ENCODE measurements at regions of chr7 and their contacts with region 1.

Region 1: DNA sequence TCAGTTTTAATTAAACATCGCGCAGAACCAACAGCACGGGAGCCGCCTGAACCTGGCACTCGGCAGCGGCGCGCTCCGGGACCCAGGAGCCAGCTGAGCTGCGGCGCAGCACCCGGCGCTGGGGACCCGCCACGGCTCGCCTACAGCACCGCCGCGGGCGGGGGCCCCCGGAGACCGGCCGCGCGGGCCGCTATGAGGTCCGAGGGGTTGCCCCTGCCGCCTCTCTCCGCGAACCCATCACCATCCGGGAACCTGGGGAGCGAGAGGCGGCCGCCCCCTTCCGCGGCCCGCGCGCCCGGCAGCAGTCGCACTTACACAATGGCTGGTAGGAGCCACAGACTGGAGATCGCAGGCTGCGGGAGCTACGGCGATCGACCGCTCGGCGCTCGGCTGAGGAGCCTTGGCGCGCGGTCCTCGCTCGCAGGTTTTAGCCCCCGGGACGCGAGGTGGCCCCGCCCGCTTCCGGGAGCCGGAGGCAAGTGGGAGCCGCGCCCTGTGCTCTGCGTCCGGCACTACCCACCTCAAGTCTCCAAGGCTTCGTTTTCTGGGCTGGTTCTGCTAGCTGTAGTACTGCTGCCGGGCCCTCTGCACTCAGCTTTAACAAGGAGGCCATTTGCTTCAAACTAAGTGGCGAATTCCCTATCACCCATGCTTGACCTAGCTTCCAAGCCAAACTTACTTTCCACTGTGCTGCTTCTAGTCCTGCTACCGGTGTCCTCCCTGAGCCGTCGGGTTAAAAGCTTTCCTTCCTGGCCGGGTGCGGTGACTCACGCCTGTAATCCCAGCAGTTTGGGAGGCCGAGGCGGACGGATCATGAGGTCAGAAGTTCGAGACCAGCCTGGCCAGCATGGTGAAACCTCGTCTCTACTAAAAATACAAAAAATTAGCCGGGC is at the start of gene TPK1:
- DNase-seq: peak; percentile 95
- H3K4me3 ChIP-seq: peak within 1 kb of the TSS; percentile 82
- H3K27ac ChIP-seq: peak within 1 kb of the TSS; percentile 85
- H3K4me1 ChIP-seq: peaks cover 24% of the 10 kb centered on the region
- CTCF ChIP-seq: no peak
- total RNA-seq, gene TPK1: 5.0 and 6.7 TPM in 2 replicates

Region 2: GRCh38 chr7:144738708-144739314 is 97.1 kb before region 1 on chr7:
- CTCF ChIA-PET with region 1: no interaction called
- POLR2A ChIA-PET with region 1: interaction called, 3 read pairs
- intact Hi-C with region 1: loop called (anchors 5 kb)
- DNase-seq: peak; percentile 60
- H3K4me3 ChIP-seq: no peak overlapping the region
- H3K27ac ChIP-seq: no peak overlapping the region
- H3K4me1 ChIP-seq: no peaks in the 10 kb centered on the region
- CTCF ChIP-seq: peak; percentile 94

Region 3: DNA sequence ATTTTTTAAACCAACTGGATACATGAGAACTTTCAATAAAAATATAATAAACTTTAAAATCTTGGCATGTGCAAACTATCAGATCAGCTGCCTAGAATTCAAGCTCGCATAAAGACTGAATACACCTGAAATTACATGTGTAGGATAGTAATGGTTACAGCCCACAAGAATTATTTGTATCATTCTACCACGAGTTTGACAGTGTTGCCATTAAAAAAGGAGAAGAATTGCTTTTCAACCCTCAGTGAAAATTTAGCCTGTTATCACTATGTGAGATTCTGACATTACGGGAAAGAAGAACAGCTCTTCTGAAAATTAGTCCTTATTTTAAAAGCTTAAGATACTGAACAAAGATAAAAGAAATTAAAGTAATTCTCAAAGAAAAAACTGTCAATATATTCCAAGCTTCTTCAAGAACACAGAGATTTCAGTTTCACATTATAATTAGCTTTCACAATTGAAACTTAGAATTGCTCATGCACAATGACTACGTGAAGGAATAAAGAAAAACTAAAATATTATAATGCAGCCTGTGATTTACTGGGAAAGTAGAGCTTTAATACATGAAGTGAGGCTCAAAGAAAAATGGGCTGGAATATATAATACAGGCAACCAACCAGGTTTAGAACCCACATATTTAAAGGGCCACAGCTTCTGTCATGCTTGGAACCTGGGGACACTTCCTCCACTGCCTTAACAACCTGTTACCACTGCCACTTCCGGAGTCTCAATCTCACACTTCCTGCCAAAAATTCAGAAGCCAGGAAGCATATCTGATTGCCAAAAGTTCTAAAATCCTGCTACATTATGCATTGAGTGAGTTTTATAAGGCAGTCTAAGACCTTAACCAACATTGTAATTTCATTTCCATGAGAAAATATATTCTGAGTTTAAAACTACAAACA is 23.3 kb before region 1 on chr7:
- CTCF ChIA-PET with region 1: interaction called, 4 read pairs
- POLR2A ChIA-PET with region 1: interaction called, 39 read pairs
- intact Hi-C with region 1: no loop called
- DNase-seq: peak; percentile 68
- H3K4me3 ChIP-seq: peak overlapping the region; percentile 19
- H3K27ac ChIP-seq: peak overlapping the region; percentile 9
- H3K4me1 ChIP-seq: peaks cover 16% of the 10 kb centered on the region
- CTCF ChIP-seq: no peak

Region 4: DNA sequence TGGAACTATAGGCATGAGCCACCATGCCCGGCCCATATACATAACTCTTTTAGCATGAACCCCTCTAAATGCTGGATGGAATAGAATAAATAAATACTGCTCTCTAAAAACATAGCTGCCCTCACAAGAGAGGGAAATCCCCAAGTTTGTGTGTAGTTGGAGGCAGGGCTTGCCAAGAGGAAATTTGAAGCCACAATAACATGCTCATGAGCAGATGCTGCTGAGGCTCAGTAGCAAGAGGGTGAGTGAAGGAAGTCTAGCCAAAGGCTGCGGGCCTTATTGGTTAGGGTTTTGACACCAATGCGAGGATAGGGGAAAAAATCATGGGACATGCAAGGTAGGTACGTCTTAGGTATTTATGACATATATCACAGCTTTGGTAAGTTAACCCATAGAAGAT is 17.4 kb before region 1 on chr7:
- CTCF ChIA-PET with region 1: interaction called, 3 read pairs
- POLR2A ChIA-PET with region 1: interaction called, 95 read pairs
- intact Hi-C with region 1: no loop called
- DNase-seq: peak; percentile 30
- H3K4me3 ChIP-seq: no peak overlapping the region
- H3K27ac ChIP-seq: no peak overlapping the region
- H3K4me1 ChIP-seq: peaks cover 19% of the 10 kb centered on the region
- CTCF ChIP-seq: no peak

Region 5: GRCh38 chr7:144848078-144848477 is 12.2 kb after region 1 on chr7:
- CTCF ChIA-PET with region 1: interaction called, 3 read pairs
- POLR2A ChIA-PET with region 1: interaction called, 18 read pairs
- intact Hi-C with region 1: no loop called
- DNase-seq: no peak
- H3K4me3 ChIP-seq: no peak overlapping the region
- H3K27ac ChIP-seq: no peak overlapping the region
- H3K4me1 ChIP-seq: no peaks in the 10 kb centered on the region
- CTCF ChIP-seq: no peak

Measured in OCI-LY7 (cell line).